ENCODE measurements at regions of chr9 and their contacts with region 1.

Region 1: GRCh38 chr9:130023144-130023787 is 19.7 kb downstream of the FNBP1 start:
- DNase-seq: no peak
- ATAC-seq: peak; percentile 78
- H3K4me3 Mint-ChIP-seq: peak overlapping the region; percentile 85
- H3K27ac Mint-ChIP-seq: peak overlapping the region; percentile 98
- H3K4me1 Mint-ChIP-seq: peaks cover 98% of the 10 kb centered on the region
- H3K27me3 Mint-ChIP-seq: no peaks in the 10 kb centered on the region
- CTCF ChIP-seq: no peak

Region 2: GRCh38 chr9:129676975-129677841 is 346.1 kb before region 1 on chr9:
- CTCF ChIA-PET with region 1: no interaction called
- POLR2A ChIA-PET with region 1: no interaction called
- intact Hi-C with region 1: no loop called
- DNase-seq: no peak
- ATAC-seq: no peak
- H3K4me3 Mint-ChIP-seq: no peak overlapping the region
- H3K27ac Mint-ChIP-seq: no peak overlapping the region
- H3K4me1 Mint-ChIP-seq: no peaks in the 10 kb centered on the region
- H3K27me3 Mint-ChIP-seq: peaks cover 13% of the 10 kb centered on the region
- CTCF ChIP-seq: no peak

Region 3: GRCh38 chr9:129962889-129963703 is 60.2 kb before region 1 on chr9:
- CTCF ChIA-PET with region 1: no interaction called
- POLR2A ChIA-PET with region 1: interaction called, 12 read pairs
- intact Hi-C with region 1: no loop called
- DNase-seq: no peak
- ATAC-seq: peak; percentile 94
- H3K4me3 Mint-ChIP-seq: peak overlapping the region; percentile 81
- H3K27ac Mint-ChIP-seq: peak overlapping the region; percentile 90
- H3K4me1 Mint-ChIP-seq: peaks cover 67% of the 10 kb centered on the region
- H3K27me3 Mint-ChIP-seq: no peaks in the 10 kb centered on the region
- CTCF ChIP-seq: no peak

Region 4: DNA sequence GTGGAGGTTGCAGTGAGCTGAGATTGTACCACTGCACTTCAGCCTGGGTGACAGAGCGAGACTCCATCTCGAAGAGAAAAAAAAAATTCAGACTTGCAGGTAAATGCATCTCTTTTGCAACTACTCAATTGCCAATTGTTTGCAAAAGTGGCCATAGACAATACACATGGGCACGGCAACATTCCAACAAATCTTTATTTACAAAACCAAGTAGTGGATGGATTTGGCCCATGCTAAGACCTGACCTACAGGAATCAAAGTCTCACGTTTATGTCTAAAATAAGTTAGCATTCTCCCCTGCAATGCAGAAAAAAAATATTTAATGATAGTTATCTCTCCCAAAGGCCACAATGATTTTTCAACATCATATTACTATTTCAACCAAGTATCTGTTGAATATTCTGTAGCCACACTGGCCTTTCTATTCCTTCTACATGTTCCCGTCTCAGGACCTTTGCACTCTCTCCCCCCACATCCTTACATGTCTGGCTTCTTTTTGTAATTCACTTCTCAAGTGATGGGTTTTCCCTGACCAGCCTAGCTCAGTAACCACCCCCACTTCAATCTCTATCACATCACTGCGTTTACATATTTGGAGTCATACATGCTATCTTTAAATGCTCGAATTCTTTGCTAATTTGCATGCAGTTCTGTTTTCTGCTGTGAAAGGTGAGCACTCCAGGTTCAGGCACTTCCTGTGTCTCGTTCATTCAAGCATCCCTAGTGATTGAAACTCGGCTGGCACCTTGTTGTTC is 34.5 kb before region 1 on chr9:
- CTCF ChIA-PET with region 1: interaction called, 3 read pairs
- POLR2A ChIA-PET with region 1: interaction called, 680 read pairs
- intact Hi-C with region 1: loop called (anchors 1 kb)
- DNase-seq: no peak
- ATAC-seq: peak; percentile 70
- H3K4me3 Mint-ChIP-seq: peak overlapping the region; percentile 60
- H3K27ac Mint-ChIP-seq: peak overlapping the region; percentile 89
- H3K4me1 Mint-ChIP-seq: peaks cover 93% of the 10 kb centered on the region
- H3K27me3 Mint-ChIP-seq: no peaks in the 10 kb centered on the region
- CTCF ChIP-seq: no peak

Region 5: DNA sequence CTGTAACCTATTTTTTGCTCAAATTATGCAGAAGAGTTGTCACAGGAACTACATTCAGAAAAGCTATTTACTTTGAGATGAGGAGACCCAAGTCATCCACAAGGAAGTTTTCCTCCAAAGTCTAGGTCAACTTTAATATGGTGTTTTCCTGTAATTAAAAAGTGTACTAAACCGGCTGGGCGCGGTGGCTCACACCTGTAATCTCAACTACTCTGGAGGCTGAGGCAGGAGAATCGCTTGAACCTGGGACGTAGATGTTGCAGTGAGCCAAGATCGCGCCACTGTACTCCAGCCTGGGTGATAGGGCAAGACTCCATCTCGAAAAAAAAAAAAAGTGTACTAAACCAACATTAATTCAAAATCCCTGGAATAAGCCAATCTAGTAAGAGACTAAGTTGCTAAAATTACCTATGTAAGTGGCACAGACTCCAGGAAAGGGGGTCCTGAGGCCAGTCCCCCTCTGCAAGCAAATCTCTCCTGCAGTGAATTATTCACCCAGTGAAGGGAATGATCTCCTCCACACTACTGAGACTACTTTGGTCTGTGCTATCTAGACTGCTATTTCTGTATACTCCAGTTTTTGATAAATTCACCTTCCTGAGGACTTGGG is 19.2 kb before region 1 on chr9:
- CTCF ChIA-PET with region 1: interaction called, 4 read pairs
- POLR2A ChIA-PET with region 1: interaction called, 1,209 read pairs
- intact Hi-C with region 1: loop called (anchors 2 kb)
- DNase-seq: no peak
- ATAC-seq: no peak
- H3K4me3 Mint-ChIP-seq: peak overlapping the region; percentile 4
- H3K27ac Mint-ChIP-seq: peak overlapping the region; percentile 71
- H3K4me1 Mint-ChIP-seq: peaks cover 85% of the 10 kb centered on the region
- H3K27me3 Mint-ChIP-seq: no peaks in the 10 kb centered on the region
- CTCF ChIP-seq: no peak

Region 6: GRCh38 chr9:130010151-130010988 is 12.9 kb before region 1 on chr9:
- CTCF ChIA-PET with region 1: interaction called, 4 read pairs
- POLR2A ChIA-PET with region 1: interaction called, 1,209 read pairs
- intact Hi-C with region 1: loop called (anchors 1 kb)
- DNase-seq: no peak
- ATAC-seq: peak; percentile 71
- H3K4me3 Mint-ChIP-seq: peak overlapping the region; percentile 58
- H3K27ac Mint-ChIP-seq: peak overlapping the region; percentile 97
- H3K4me1 Mint-ChIP-seq: peaks cover 92% of the 10 kb centered on the region
- H3K27me3 Mint-ChIP-seq: no peaks in the 10 kb centered on the region
- CTCF ChIP-seq: no peak

Region 7: DNA sequence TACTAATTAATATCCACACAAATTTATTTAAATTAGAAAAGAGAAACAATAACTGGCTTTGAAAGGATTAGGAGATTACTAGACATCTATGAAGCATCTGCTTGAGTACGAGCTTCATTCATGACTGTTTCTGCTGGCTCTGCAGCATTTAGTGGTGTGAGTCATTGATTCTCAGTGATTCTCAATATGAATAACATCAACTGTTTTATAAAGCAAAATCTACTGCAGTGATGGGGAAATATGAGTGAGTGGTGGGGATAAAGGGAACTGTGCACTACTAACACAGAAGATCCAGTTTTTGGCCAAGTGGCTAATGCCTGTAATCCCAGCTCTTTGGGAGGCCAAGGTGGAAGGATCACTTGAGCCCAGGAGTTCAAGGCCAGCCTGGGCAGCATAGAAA is 11.3 kb after region 1 on chr9:
- CTCF ChIA-PET with region 1: interaction called, 3 read pairs
- POLR2A ChIA-PET with region 1: interaction called, 1,209 read pairs
- intact Hi-C with region 1: loop called (anchors 1 kb)
- DNase-seq: no peak
- ATAC-seq: peak; percentile 38
- H3K4me3 Mint-ChIP-seq: peak overlapping the region; percentile 54
- H3K27ac Mint-ChIP-seq: peak overlapping the region; percentile 95
- H3K4me1 Mint-ChIP-seq: peaks cover 97% of the 10 kb centered on the region
- H3K27me3 Mint-ChIP-seq: no peaks in the 10 kb centered on the region
- CTCF ChIP-seq: no peak

Region 8: DNA sequence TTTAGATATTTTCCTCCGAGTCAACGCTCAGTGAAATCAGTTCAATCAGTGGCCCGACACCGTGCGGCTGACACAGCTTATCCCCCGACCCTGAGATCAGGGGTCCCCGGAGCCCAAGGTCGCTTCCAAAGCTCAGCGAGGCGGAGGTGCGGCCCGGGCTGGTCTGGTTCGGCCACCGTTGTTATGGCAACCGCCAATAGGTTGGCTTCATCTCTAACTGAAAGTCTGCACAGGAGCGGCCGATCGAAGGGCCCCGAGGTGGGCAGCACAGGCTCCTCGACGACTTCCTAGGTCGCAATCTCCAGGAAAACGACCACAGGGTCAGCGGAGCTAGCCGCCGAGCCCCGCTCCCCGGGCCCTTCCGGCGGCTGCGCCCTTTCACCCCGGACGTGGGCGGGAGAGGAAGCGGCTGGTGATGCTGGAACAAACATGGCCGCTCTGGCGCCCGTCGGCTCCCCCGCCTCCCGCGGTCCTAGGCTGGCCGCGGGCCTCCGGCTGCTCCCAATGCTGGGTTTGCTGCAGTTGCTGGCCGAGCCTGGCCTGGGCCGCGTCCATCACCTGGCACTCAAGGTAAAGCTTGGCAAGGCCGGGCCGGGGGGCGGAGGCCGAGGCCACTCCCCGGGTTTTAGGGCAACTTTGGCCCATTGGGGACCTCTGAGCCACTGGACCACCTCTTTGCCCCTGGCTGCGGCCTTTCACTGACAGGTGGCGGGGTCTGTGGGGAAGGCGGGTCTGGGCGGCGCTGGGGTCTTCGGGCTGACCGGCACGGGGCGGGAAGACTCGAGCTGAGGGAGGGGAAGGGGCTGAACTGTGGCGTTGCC is 30.4 kb after region 1 on chr9 and contains the start of gene GPR107:
- CTCF ChIA-PET with region 1: no interaction called
- POLR2A ChIA-PET with region 1: interaction called, 27 read pairs
- intact Hi-C with region 1: no loop called
- DNase-seq: peak; percentile 73
- ATAC-seq: peak; percentile 96
- H3K4me3 Mint-ChIP-seq: peak within 1 kb of the TSS; percentile 91
- H3K27ac Mint-ChIP-seq: peak within 1 kb of the TSS; percentile 80
- H3K4me1 Mint-ChIP-seq: peaks cover 30% of the 10 kb centered on the region
- H3K27me3 Mint-ChIP-seq: no peaks in the 10 kb centered on the region
- CTCF ChIP-seq: no peak
- total RNA-seq, gene GPR107: 17.7 and 19.6 TPM in 2 replicates

Region 9: GRCh38 chr9:130088051-130088450 is 64.8 kb after region 1 on chr9:
- CTCF ChIA-PET with region 1: no interaction called
- POLR2A ChIA-PET with region 1: no interaction called
- intact Hi-C with region 1: no loop called
- DNase-seq: no peak
- ATAC-seq: no peak
- H3K4me3 Mint-ChIP-seq: no peak overlapping the region
- H3K27ac Mint-ChIP-seq: no peak overlapping the region
- H3K4me1 Mint-ChIP-seq: no peaks in the 10 kb centered on the region
- H3K27me3 Mint-ChIP-seq: no peaks in the 10 kb centered on the region
- CTCF ChIP-seq: no peak